ENCODE measurements at regions of chr6 and their contacts with region 1.

Region 1: DNA sequence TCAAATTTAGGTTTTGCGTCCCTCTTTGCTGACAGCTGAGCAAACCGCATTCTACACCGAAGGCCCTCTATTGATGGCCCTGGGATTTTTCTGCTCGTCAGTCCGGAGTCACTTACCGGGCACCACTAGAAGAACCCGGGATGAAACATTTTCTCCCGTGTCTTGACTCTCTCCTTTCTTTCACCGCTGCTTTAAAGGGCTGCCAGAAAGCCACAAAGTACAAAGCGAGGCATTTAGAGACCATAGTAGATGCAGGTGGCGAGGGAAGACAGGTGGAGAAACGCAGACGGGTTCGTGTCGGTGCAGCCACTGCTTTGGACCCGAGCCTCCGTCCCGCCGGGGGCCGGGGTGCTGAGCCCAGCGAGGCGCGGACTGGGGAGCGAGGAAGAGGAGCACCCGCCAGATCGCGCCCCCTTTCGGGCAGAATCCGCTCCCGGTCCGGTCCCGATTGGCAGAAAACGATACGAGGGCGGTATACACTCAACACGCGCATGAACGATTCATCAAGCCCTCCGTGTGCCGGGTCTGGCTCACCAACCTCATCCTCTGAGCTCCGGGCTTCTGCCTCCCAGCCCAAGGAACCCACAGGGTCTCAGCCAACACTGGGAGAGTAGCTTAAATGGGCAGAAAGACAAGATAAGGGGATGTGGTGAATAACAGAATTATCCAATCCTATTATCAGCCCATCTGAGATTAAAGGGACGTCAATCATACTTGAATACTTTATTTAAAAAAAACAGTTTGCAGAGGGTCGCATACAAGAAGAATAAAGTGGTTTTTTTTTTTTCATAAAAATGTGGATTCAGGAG is 84.9 kb downstream of the TRIM27 start:
- DNase-seq: peak; percentile 58 to 90 (median 74)
- ATAC-seq: peak; percentile 62
- H3K4me3 ChIP-seq: peak overlapping the region; percentile 65
- H3K4me3 Mint-ChIP-seq: peak overlapping the region; percentile 76
- H3K27ac ChIP-seq: peak overlapping the region; percentile 12 to 38
- H3K27ac Mint-ChIP-seq: peak overlapping the region; percentile 96
- H3K4me1 ChIP-seq: peaks cover 14% of the 10 kb centered on the region
- H3K4me1 Mint-ChIP-seq: peaks cover 22% of the 10 kb centered on the region
- H3K27me3 ChIP-seq: peaks cover 3 to 22% of the 10 kb centered on the region in 2 experiments
- H3K27me3 Mint-ChIP-seq: peaks cover 49% of the 10 kb centered on the region
- CTCF ChIP-seq: peak; percentile 77

Region 2: GRCh38 chr6:28710466-28711191 is 128.2 kb before region 1 on chr6:
- CTCF ChIA-PET with region 1: no interaction called
- POLR2A ChIA-PET with region 1: no interaction called
- intact Hi-C with region 1: loop called in 1 of 2 experiments (anchors 10 kb)
- DNase-seq: no peak
- ATAC-seq: no peak
- H3K4me3 ChIP-seq: no peak overlapping the region
- H3K4me3 Mint-ChIP-seq: no peak overlapping the region
- H3K27ac ChIP-seq: no peak overlapping the region
- H3K27ac Mint-ChIP-seq: no peak overlapping the region
- H3K4me1 ChIP-seq: peaks cover 4% of the 10 kb centered on the region
- H3K4me1 Mint-ChIP-seq: peaks cover 7% of the 10 kb centered on the region
- H3K27me3 ChIP-seq: peaks cover 24 to 36% of the 10 kb centered on the region in 2 experiments
- H3K27me3 Mint-ChIP-seq: peaks cover 86% of the 10 kb centered on the region
- CTCF ChIP-seq: no peak

Region 3: DNA sequence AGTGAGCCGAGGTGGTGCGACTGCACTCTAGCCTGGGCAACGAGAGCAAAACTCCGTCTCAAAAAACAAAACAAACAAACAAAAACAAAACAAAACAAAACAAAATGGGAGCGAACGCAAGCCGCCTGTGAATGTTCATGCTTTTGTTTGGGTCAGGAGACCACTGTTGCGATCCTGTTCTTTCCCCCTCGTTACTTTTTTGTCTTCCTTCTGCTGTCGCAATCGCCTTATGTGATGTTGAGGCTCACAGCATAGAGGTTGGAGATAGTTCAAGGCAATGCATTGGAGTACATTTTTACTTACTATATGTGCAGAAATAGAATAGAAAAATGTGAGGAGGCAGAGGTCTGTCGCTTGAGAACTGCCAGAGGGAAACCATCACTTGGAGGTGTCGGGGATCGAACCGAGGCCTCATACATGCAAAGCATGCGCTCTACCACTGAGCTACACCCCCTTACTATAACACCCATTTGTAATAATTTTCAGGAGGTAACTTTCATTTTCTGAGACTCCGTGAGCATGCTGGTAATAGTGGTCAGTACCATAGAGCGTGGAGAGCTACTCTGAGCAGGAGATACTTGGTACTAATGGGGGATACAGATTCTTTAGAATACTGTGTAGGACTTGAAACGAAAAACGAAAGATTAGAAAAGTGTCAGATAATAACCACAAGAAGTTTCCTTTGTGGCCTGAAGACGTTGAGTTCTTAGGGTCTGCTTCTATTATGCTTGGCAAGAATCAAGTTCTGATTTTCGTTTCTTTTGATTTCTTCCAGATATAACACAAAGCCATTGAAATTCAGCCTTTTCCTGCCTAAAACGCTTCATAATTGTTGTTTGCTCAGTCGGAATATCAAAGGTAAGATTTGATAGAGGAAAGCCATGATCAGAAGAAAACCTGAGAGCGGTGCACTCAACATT is 36.2 kb before region 1 on chr6:
- CTCF ChIA-PET with region 1: no interaction called
- POLR2A ChIA-PET with region 1: no interaction called
- intact Hi-C with region 1: no loop called
- DNase-seq: no peak
- ATAC-seq: no peak
- H3K4me3 ChIP-seq: no peak overlapping the region
- H3K4me3 Mint-ChIP-seq: no peak overlapping the region
- H3K27ac ChIP-seq: no peak overlapping the region
- H3K27ac Mint-ChIP-seq: no peak overlapping the region
- H3K4me1 ChIP-seq: no peaks in the 10 kb centered on the region
- H3K4me1 Mint-ChIP-seq: no peaks in the 10 kb centered on the region
- H3K27me3 ChIP-seq: peaks cover 44 to 56% of the 10 kb centered on the region in 2 experiments
- H3K27me3 Mint-ChIP-seq: peaks cover 85% of the 10 kb centered on the region
- CTCF ChIP-seq: no peak

Region 4: GRCh38 chr6:28880894-28881780 is 42.3 kb after region 1 on chr6:
- CTCF ChIA-PET with region 1: interaction called, 7 read pairs
- POLR2A ChIA-PET with region 1: interaction called, 17 read pairs
- intact Hi-C with region 1: no loop called
- DNase-seq: peak in 13 of 14 experiments; percentile 27 to 71 (median 43)
- ATAC-seq: no peak
- H3K4me3 ChIP-seq: peak overlapping the region; percentile 39
- H3K4me3 Mint-ChIP-seq: peak overlapping the region; percentile 77
- H3K27ac ChIP-seq: no peak overlapping the region
- H3K27ac Mint-ChIP-seq: peak overlapping the region; percentile 81
- H3K4me1 ChIP-seq: peaks cover 24% of the 10 kb centered on the region
- H3K4me1 Mint-ChIP-seq: peaks cover 39% of the 10 kb centered on the region
- H3K27me3 ChIP-seq: no peaks in the 10 kb centered on the region
- H3K27me3 Mint-ChIP-seq: peaks cover 7% of the 10 kb centered on the region
- CTCF ChIP-seq: no peak

Region 5: DNA sequence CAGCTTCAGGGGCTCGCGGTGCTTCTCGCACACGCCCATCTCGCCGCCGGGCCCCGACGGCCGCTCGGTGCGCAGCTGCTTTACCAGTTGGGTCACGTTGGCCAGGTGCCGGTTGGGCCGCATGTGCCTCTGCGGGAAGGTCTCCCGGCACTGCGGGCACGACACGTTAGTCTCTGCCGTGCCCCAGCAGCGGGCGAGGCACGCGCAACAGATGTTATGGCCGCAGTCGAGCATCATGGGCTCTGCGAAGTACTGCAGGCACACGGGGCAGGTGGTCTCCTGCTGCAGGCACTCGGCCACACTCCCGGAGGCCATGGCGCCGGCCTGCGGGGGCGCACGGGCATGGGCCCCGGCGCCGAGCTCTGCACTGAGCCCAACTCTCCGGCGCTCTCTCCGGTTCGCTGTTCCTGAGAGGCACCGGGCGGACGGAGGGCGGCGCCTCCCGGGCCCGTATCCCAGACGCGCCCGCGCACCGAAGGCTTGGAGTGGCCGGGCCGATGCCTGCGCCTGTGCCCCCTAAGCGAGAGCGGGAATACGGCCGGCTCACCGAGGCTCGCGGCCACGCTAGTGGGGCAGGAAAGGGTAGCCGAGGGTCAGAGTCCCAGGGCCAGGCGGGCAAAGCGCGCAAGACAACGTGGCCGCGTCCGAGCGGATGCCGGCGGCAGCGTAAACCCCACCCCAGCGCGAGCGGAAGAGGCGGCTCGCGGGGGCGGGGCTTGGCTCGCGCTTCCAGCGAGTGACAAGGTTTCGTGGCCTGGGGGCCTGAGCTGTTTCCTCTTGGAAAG is 84.7 kb after region 1 on chr6 and contains the start of gene TRIM27:
- CTCF ChIA-PET with region 1: interaction called, 25 read pairs
- POLR2A ChIA-PET with region 1: interaction called, 21 read pairs
- intact Hi-C with region 1: loop called in 1 of 2 experiments (anchors 5 kb)
- DNase-seq: peak; percentile 58 to 90 (median 74)
- ATAC-seq: peak; percentile 78
- H3K4me3 ChIP-seq: peak within 1 kb of the TSS; percentile 98
- H3K4me3 Mint-ChIP-seq: peak within 1 kb of the TSS; percentile 95
- H3K27ac ChIP-seq: peak within 1 kb of the TSS; percentile 67 to 80
- H3K27ac Mint-ChIP-seq: peak within 1 kb of the TSS; percentile 89
- H3K4me1 ChIP-seq: peaks cover 44% of the 10 kb centered on the region
- H3K4me1 Mint-ChIP-seq: peaks cover 42% of the 10 kb centered on the region
- H3K27me3 ChIP-seq: no peaks in the 10 kb centered on the region
- H3K27me3 Mint-ChIP-seq: no peaks in the 10 kb centered on the region
- CTCF ChIP-seq: no peak
- total RNA-seq, gene TRIM27: 11.5 to 13.2 TPM

Region 6: DNA sequence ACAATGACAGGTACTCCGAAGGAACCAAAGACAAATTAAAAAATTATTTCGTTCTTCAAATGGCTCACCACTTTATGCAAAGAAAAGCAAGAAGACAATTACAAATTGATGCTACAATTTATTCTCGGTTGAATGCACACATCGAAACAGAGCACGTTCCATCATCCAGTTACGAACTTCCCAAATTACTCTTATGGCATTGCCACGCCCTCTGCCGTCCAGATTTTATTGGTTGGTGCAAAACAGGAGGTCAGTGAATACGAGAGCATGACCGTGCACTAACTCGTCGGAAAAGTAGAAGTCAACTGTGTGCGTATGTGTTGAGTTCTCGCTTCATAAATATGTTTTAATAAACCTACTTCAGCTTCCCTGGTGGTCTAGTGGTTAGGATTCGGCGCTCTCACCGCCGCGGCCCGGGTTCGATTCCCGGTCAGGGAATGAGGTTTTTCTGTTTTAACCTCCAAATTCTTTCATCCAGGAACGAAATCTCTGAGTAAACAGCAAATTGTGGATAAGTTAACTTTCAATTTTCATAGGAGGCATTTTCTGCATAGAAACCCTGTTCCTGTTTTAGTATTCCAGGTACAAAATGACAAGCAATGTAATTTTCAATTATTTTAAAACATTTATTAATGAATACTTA is 143.1 kb after region 1 on chr6:
- CTCF ChIA-PET with region 1: interaction called, 15 read pairs
- POLR2A ChIA-PET with region 1: interaction called, 24 read pairs
- intact Hi-C with region 1: loop called (anchors 1 to 10 kb)
- DNase-seq: peak; percentile 46 to 91 (median 64)
- ATAC-seq: peak; percentile 62
- H3K4me3 ChIP-seq: peak overlapping the region; percentile 88
- H3K4me3 Mint-ChIP-seq: peak overlapping the region; percentile 95
- H3K27ac ChIP-seq: no peak overlapping the region
- H3K27ac Mint-ChIP-seq: peak overlapping the region; percentile 98
- H3K4me1 ChIP-seq: peaks cover 28% of the 10 kb centered on the region
- H3K4me1 Mint-ChIP-seq: peaks cover 82% of the 10 kb centered on the region
- H3K27me3 ChIP-seq: peaks cover 0 to 15% of the 10 kb centered on the region in 2 experiments
- H3K27me3 Mint-ChIP-seq: peaks cover 64% of the 10 kb centered on the region
- CTCF ChIP-seq: no peak

Region 7: GRCh38 chr6:29016559-29017427 is 178.0 kb after region 1 on chr6:
- CTCF ChIA-PET with region 1: interaction called, 55 read pairs
- POLR2A ChIA-PET with region 1: interaction called, 40 read pairs
- intact Hi-C with region 1: loop called (anchors 1 kb)
- DNase-seq: peak; percentile 71 to 91 (median 80)
- ATAC-seq: peak; percentile 66
- H3K4me3 ChIP-seq: peak overlapping the region; percentile 55
- H3K4me3 Mint-ChIP-seq: peak overlapping the region; percentile 87
- H3K27ac ChIP-seq: no peak overlapping the region
- H3K27ac Mint-ChIP-seq: peak overlapping the region; percentile 50
- H3K4me1 ChIP-seq: peaks cover 21% of the 10 kb centered on the region
- H3K4me1 Mint-ChIP-seq: peaks cover 16% of the 10 kb centered on the region
- H3K27me3 ChIP-seq: peaks cover 13 to 24% of the 10 kb centered on the region in 2 experiments
- H3K27me3 Mint-ChIP-seq: peaks cover 42% of the 10 kb centered on the region
- CTCF ChIP-seq: peak; percentile 95

Measured in CD4-positive, alpha-beta T cell (primary cell).